CD8-positive, alpha-beta T cell (primary cell): ENCODE measurements at regions of chr1 and their contacts with region 1.

Region 1: DNA sequence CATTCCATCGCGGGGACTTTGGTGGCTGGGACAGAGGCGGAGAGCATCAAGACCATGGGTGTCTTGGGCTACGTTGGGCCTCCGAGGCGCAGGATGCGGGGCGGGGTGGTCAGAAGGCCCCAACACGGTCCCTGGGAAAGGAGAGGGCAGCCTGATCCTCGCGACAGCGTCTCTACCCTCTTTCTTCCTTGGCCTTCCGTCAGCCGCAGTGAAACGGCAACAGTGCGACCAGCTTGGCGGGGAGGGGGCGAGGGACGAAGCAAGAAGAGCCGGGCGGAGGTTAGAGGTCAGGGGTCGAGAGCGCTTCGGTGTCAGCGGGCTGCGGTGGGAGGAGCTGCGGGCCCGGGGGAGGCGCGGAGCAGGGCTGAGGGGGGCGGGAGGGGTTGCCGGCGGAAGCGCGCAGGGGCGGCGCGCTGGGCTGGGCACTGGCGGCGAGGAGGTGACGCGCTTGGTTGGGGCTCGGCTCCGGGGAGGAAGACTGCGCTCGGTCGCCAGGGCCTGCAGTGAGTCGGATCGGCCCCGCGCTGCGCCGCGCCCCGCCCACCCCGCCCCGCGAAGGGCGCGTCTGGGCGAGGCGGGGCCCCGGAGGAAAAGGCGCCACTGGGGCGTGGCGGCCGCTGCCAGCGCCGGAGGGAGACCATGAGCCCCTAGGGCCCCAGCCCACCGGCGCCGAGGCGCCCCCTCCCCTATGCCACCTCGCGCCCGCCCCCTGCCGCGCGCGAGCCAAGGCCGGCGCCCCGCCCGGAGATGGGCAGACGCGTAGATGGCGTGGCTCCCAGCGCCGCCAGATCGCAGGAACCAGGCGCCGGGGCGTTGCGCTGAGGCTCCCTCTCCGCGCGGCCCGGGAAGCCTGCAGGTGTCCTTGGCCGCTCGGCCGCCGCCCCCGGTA is at the start of gene KCNC4:
- DNase-seq: peak; percentile 87 to 97 (median 91)
- ATAC-seq: peak; percentile 84
- H3K4me3 ChIP-seq: peak within 1 kb of the TSS; percentile 68 to 73
- H3K4me3 Mint-ChIP-seq: peak within 1 kb of the TSS; percentile 89
- H3K27ac ChIP-seq: peak within 1 kb of the TSS; percentile 69 to 90
- H3K27ac Mint-ChIP-seq: peak within 1 kb of the TSS; percentile 93
- H3K4me1 ChIP-seq: peaks cover 49% of the 10 kb centered on the region
- H3K4me1 Mint-ChIP-seq: peaks cover 54% of the 10 kb centered on the region
- H3K27me3 ChIP-seq: peaks cover 0 to 5% of the 10 kb centered on the region in 2 experiments
- H3K27me3 Mint-ChIP-seq: no peaks in the 10 kb centered on the region
- CTCF ChIP-seq: no peak
- total RNA-seq, gene KCNC4: 11.4 to 13.1 TPM

Region 2: GRCh38 chr1:110003747-110004630 is 206.0 kb before region 1 on chr1:
- CTCF ChIA-PET with region 1: no interaction called
- POLR2A ChIA-PET with region 1: no interaction called
- intact Hi-C with region 1: no loop called
- DNase-seq: peak in 1 of 9 experiments; percentile 24
- ATAC-seq: peak; percentile 42
- H3K4me3 ChIP-seq: no peak overlapping the region
- H3K4me3 Mint-ChIP-seq: peak overlapping the region; percentile 44
- H3K27ac ChIP-seq: no peak overlapping the region
- H3K27ac Mint-ChIP-seq: peak overlapping the region; percentile 41
- H3K4me1 ChIP-seq: peaks cover 13% of the 10 kb centered on the region
- H3K4me1 Mint-ChIP-seq: peaks cover 30% of the 10 kb centered on the region
- H3K27me3 ChIP-seq: no peaks in the 10 kb centered on the region
- H3K27me3 Mint-ChIP-seq: no peaks in the 10 kb centered on the region
- CTCF ChIP-seq: no peak

Region 3: GRCh38 chr1:110034451-110035235 is 175.3 kb before region 1 on chr1 and contains the start of gene STRIP1:
- CTCF ChIA-PET with region 1: interaction called, 3 read pairs
- POLR2A ChIA-PET with region 1: no interaction called
- intact Hi-C with region 1: loop called (anchors 2 to 5 kb)
- DNase-seq: peak; percentile 83 to 97 (median 90)
- ATAC-seq: peak; percentile 94
- H3K4me3 ChIP-seq: peak within 1 kb of the TSS; percentile 77 to 89
- H3K4me3 Mint-ChIP-seq: peak within 1 kb of the TSS; percentile 98
- H3K27ac ChIP-seq: peak within 1 kb of the TSS; percentile 74 to 84
- H3K27ac Mint-ChIP-seq: peak within 1 kb of the TSS; percentile 96
- H3K4me1 ChIP-seq: peaks cover 36% of the 10 kb centered on the region
- H3K4me1 Mint-ChIP-seq: peaks cover 53% of the 10 kb centered on the region
- H3K27me3 ChIP-seq: no peaks in the 10 kb centered on the region
- H3K27me3 Mint-ChIP-seq: no peaks in the 10 kb centered on the region
- CTCF ChIP-seq: no peak
- total RNA-seq, gene STRIP1: 94.6 to 109 TPM

Region 4: DNA sequence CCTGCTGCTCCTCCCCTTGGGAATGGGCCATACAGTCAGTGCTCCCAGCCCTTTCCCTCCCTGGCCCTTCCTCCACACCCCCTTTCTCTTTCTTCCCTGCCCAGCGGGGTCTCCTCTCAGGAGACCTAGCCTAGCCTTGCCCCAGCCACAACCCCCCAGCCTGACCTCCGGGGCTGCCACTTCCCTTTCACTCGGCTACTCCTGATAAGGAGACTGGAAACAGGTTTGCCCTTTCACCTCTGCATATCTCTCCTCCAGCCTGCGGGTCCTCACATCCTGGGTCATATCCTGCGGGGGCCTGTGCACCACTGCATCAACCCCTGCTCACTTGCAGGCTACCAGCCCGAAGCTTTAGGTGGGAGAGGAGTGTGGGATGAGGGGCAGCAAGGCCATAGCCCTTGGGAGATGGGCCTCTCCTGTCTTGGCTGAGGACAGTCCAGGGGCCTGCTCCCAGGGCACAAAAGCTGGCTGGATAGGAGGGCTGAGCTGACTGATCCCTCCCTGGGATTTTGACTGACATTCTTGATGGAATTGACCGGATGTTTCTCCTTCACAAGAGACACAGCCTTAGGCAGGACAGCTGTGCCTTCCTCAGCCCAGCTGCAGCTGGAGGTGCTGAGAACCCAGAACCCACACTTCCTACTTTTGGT is 120.3 kb before region 1 on chr1:
- CTCF ChIA-PET with region 1: no interaction called
- POLR2A ChIA-PET with region 1: no interaction called
- intact Hi-C with region 1: no loop called
- DNase-seq: no peak
- ATAC-seq: no peak
- H3K4me3 ChIP-seq: no peak overlapping the region
- H3K4me3 Mint-ChIP-seq: no peak overlapping the region
- H3K27ac ChIP-seq: no peak overlapping the region
- H3K27ac Mint-ChIP-seq: no peak overlapping the region
- H3K4me1 ChIP-seq: no peaks in the 10 kb centered on the region
- H3K4me1 Mint-ChIP-seq: peaks cover 3% of the 10 kb centered on the region
- H3K27me3 ChIP-seq: peaks cover 3 to 4% of the 10 kb centered on the region in 2 experiments
- H3K27me3 Mint-ChIP-seq: peaks cover 32% of the 10 kb centered on the region
- CTCF ChIP-seq: no peak

Region 5: DNA sequence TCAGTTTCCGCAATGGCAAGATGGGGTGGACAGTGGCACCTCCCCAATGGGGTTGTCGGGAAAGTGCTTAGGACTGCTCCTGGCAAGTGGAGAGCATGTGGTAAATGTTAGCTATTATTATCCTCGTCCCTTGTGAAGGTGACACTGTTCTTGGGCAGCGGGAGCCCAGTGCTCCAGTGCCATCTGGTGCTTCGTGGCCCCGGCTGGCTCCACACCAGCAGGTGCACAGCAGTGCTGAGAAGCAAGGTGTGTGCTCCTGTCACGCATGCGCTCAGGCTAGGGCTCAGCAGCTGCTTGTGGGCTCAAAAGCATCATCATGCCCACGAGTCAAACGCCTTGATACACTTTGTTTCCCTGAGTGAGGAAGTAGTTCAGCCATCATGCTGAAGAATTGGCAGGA is 24.8 kb before region 1 on chr1:
- CTCF ChIA-PET with region 1: no interaction called
- POLR2A ChIA-PET with region 1: no interaction called
- intact Hi-C with region 1: no loop called
- DNase-seq: no peak
- ATAC-seq: no peak
- H3K4me3 ChIP-seq: no peak overlapping the region
- H3K4me3 Mint-ChIP-seq: no peak overlapping the region
- H3K27ac ChIP-seq: no peak overlapping the region
- H3K27ac Mint-ChIP-seq: no peak overlapping the region
- H3K4me1 ChIP-seq: no peaks in the 10 kb centered on the region
- H3K4me1 Mint-ChIP-seq: no peaks in the 10 kb centered on the region
- H3K27me3 ChIP-seq: no peaks in the 10 kb centered on the region
- H3K27me3 Mint-ChIP-seq: peaks cover 14% of the 10 kb centered on the region
- CTCF ChIP-seq: no peak

Region 6: DNA sequence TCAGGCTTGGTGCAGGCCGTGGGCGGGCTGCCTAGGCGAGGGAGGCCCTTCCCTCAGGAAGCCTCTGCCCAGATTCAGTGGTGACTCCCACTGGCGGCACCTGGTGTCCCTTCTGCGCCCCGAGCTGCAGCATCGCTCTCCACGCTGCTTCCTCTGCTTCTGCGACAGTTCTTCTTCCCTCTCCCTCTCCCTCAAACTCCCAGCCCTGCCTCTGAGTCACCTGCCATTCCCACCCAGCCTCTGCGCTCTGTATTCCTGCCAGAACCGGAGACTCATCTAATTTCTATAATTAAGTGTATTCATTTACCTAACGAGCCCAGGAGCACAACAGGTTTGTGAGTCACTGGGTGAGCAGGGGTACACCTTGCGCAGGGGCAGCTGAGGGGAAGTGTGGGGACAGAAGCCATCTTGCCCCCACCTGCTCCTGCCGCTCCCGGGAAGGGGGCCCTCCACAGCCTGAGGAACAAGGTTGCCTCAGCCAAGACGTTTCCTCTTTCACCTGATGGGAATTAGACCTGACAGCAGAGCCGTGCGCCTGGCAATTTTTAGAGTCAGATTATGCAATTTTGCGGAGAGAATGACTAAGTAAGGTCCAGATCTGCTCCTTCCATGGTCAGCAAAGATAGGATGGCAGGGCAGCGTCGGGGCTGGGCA is 19.5 kb after region 1 on chr1:
- CTCF ChIA-PET with region 1: interaction called, 11 read pairs
- POLR2A ChIA-PET with region 1: no interaction called
- intact Hi-C with region 1: loop called in 1 of 2 experiments (anchors 1 kb)
- DNase-seq: no peak
- ATAC-seq: no peak
- H3K4me3 ChIP-seq: no peak overlapping the region
- H3K4me3 Mint-ChIP-seq: no peak overlapping the region
- H3K27ac ChIP-seq: no peak overlapping the region
- H3K27ac Mint-ChIP-seq: no peak overlapping the region
- H3K4me1 ChIP-seq: no peaks in the 10 kb centered on the region
- H3K4me1 Mint-ChIP-seq: no peaks in the 10 kb centered on the region
- H3K27me3 ChIP-seq: no peaks in the 10 kb centered on the region
- H3K27me3 Mint-ChIP-seq: no peaks in the 10 kb centered on the region
- CTCF ChIP-seq: no peak

Region 7: GRCh38 chr1:110312188-110313121 is 102.5 kb after region 1 on chr1:
- CTCF ChIA-PET with region 1: interaction called, 783 read pairs
- POLR2A ChIA-PET with region 1: interaction called, 12 read pairs
- intact Hi-C with region 1: loop called (anchors 1 kb)
- DNase-seq: peak; percentile 49 to 85 (median 77)
- ATAC-seq: peak; percentile 99
- H3K4me3 ChIP-seq: no peak overlapping the region
- H3K4me3 Mint-ChIP-seq: no peak overlapping the region
- H3K27ac ChIP-seq: no peak overlapping the region
- H3K27ac Mint-ChIP-seq: no peak overlapping the region
- H3K4me1 ChIP-seq: peaks cover 2% of the 10 kb centered on the region
- H3K4me1 Mint-ChIP-seq: peaks cover 3% of the 10 kb centered on the region
- H3K27me3 ChIP-seq: no peaks in the 10 kb centered on the region
- H3K27me3 Mint-ChIP-seq: no peaks in the 10 kb centered on the region
- CTCF ChIP-seq: peak; percentile 87

Region 8: DNA sequence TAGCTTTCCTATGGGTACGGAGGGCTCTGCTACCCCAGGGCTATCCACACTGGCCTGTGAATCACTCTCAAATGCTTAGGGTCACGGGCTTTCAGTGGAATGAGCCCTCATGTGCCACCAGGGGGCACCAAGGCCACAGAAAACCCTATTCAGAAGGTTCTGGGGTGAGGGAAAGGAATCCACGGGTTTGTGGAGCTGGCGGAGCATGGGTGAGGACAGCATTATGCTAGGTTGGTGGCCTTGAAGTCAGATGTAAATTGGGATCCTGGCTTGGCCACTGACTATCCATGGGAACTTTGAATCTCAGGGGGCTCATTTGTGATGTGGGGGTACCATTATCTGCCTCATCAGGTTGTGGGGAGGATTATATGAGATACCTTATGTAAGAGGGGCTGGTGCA is 202.6 kb after region 1 on chr1:
- CTCF ChIA-PET with region 1: interaction called, 10 read pairs
- POLR2A ChIA-PET with region 1: interaction called, 3 read pairs
- intact Hi-C with region 1: loop called (anchors 1 kb)
- DNase-seq: peak; percentile 25 to 72 (median 60)
- ATAC-seq: peak; percentile 41
- H3K4me3 ChIP-seq: no peak overlapping the region
- H3K4me3 Mint-ChIP-seq: no peak overlapping the region
- H3K27ac ChIP-seq: no peak overlapping the region
- H3K27ac Mint-ChIP-seq: no peak overlapping the region
- H3K4me1 ChIP-seq: peaks cover 6% of the 10 kb centered on the region
- H3K4me1 Mint-ChIP-seq: peaks cover 18% of the 10 kb centered on the region
- H3K27me3 ChIP-seq: no peaks in the 10 kb centered on the region
- H3K27me3 Mint-ChIP-seq: no peaks in the 10 kb centered on the region
- CTCF ChIP-seq: peak; percentile 64

Region 9: GRCh38 chr1:110619412-110620249 is 409.7 kb after region 1 on chr1:
- CTCF ChIA-PET with region 1: no interaction called
- POLR2A ChIA-PET with region 1: no interaction called
- intact Hi-C with region 1: loop called (anchors 5 kb)
- DNase-seq: peak; percentile 79 to 96 (median 90)
- ATAC-seq: peak; percentile 84
- H3K4me3 ChIP-seq: peak overlapping the region; percentile 62 to 65
- H3K4me3 Mint-ChIP-seq: peak overlapping the region; percentile 89
- H3K27ac ChIP-seq: peak overlapping the region; percentile 58 to 73
- H3K27ac Mint-ChIP-seq: peak overlapping the region; percentile 89
- H3K4me1 ChIP-seq: peaks cover 28% of the 10 kb centered on the region
- H3K4me1 Mint-ChIP-seq: peaks cover 41% of the 10 kb centered on the region
- H3K27me3 ChIP-seq: peaks cover 0 to 4% of the 10 kb centered on the region in 2 experiments
- H3K27me3 Mint-ChIP-seq: no peaks in the 10 kb centered on the region
- CTCF ChIP-seq: peak; percentile 97

Region 10: DNA sequence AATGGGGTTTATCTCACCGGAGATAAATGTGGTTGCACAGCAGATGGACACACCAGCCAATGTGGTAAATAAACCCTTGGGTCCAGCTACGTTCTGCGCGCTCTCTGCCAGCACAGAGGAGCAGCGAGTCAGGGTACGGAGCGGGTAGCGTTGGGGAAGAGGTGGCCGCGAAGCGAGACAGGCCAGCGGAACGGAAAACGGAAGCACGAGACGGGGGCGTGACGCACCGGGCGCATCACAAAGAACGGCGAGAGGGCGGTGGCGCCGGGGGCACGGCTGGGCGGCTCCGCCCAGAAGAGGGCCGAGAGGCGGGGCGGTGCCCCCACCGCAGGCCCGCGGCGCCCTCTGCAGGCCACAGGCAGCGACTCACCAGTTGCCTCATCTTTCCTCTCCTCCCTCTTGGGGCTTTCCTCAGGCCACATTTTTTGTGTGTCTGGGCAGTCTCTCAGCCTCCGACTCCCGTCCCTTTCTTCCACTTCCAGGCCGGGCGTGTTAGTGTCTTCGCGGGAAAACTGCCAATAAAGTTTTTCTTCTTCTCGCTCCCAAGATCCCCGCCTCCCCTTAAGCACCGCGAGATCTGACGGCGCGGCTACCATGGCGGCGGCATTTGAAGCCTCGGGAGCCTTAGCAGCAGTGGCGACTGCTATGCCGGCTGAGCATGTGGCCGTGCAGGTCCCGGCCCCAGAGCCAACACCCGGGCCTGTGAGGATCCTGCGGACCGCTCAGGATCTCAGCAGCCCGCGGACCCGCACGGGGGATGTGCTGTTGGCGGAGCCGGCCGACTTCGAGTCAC is 1545.6 kb after region 1 on chr1 and contains the start of gene DDX20:
- CTCF ChIA-PET with region 1: no interaction called
- POLR2A ChIA-PET with region 1: no interaction called
- intact Hi-C with region 1: loop called (anchors 5 kb)
- DNase-seq: peak; percentile 86 to 97 (median 93)
- ATAC-seq: peak; percentile 89
- H3K4me3 ChIP-seq: peak within 1 kb of the TSS; percentile 75 to 89
- H3K4me3 Mint-ChIP-seq: peak within 1 kb of the TSS; percentile 90
- H3K27ac ChIP-seq: peak within 1 kb of the TSS; percentile 93 to 96
- H3K27ac Mint-ChIP-seq: peak within 1 kb of the TSS; percentile 98
- H3K4me1 ChIP-seq: peaks cover 19% of the 10 kb centered on the region
- H3K4me1 Mint-ChIP-seq: peaks cover 43% of the 10 kb centered on the region
- H3K27me3 ChIP-seq: no peaks in the 10 kb centered on the region
- H3K27me3 Mint-ChIP-seq: no peaks in the 10 kb centered on the region
- CTCF ChIP-seq: peak; percentile 83
- total RNA-seq, gene DDX20: 35.4 to 35.9 TPM